HCT116 (cell line): ENCODE measurements at regions of chr14 and their contacts with region 1.

Region 1: GRCh38 chr14:24080888-24081738 is 9.8 kb downstream of the CPNE6 start:
- DNase-seq: no peak
- ATAC-seq: peak; percentile 93
- H3K4me3 ChIP-seq: peak overlapping the region; percentile 57 to 68
- H3K27ac ChIP-seq: peak overlapping the region; percentile 97
- H3K4me1 ChIP-seq: peaks cover 18 to 27% of the 10 kb centered on the region in 2 experiments
- H3K27me3 ChIP-seq: no peaks in the 10 kb centered on the region
- CTCF ChIP-seq: no peak
- POLR2A ChIP-seq: peak; percentile 79
- RAD21 ChIP-seq: no peak

Region 2: DNA sequence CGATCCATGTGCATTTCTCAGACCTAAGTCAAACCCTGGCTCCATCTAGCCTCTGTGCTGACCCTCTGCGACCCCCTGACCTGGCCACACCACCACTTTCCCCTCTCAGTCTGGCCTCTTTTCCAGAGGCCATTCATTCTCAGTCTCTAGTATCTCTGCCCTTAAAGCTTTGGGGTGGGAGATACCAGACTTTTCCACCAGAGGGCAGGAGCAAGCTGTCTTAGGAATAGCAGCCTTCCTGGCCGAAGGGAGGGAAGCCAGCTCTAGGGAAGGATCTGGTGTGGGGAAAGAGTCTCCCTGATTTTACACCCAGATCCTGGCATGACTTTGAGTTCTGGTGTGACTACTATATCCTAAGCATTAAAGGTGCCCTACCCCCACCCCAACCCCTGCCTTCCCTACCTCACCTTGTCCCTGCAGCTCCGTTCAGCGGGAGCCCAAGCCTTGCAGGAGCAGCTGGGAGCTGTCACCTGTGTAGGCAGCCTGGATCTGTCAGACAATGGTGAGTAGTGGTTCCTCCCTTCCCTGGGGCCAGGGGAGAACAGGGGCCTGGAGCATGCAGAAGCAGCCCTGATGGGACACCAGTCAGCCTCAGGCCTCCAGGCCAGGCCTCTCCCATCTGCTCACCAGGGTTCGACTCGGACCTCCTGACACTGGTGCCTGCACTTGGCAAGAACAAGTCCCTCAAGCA is 22.7 kb before region 1 on chr14:
- CTCF ChIA-PET with region 1: interaction called, 16 read pairs
- POLR2A ChIA-PET with region 1: no interaction called
- RAD21 ChIA-PET with region 1: no interaction called
- intact Hi-C with region 1: no loop called
- DNase-seq: no peak
- ATAC-seq: peak; percentile 92
- H3K4me3 ChIP-seq: no peak overlapping the region
- H3K27ac ChIP-seq: no peak overlapping the region
- H3K4me1 ChIP-seq: peaks cover 0 to 3% of the 10 kb centered on the region in 2 experiments; a peak in 1 of 4 replicates
- H3K27me3 ChIP-seq: no peaks in the 10 kb centered on the region
- CTCF ChIP-seq: peak; percentile 72 to 89 (median 87); a peak in 5 of 6 replicates
- POLR2A ChIP-seq: no peak
- RAD21 ChIP-seq: peak; percentile 95